A549 (cell line): ENCODE measurements at regions of chr2 and their contacts with region 1.

Region 1: GRCh38 chr2:19111343-19111742 is 247.1 kb downstream of the OSR1 start:
- DNase-seq: no peak
- ATAC-seq: no peak
- H3K4me3 ChIP-seq: no peak overlapping the region
- H3K27ac ChIP-seq: no peak overlapping the region
- H3K4me1 ChIP-seq: no peaks in the 10 kb centered on the region
- CTCF ChIP-seq: no peak
- EP300 ChIP-seq: no peak
- POLR2A ChIP-seq: no peak
- RAD21 ChIP-seq: no peak

Region 2: GRCh38 chr2:18440141-18440661 is 671.1 kb before region 1 on chr2:
- CTCF ChIA-PET with region 1: no interaction called
- POLR2A ChIA-PET with region 1: no interaction called
- DNase-seq: no peak
- ATAC-seq: no peak
- H3K4me3 ChIP-seq: no peak overlapping the region
- H3K27ac ChIP-seq: no peak overlapping the region
- H3K4me1 ChIP-seq: no peaks in the 10 kb centered on the region
- CTCF ChIP-seq: no peak
- EP300 ChIP-seq: no peak
- POLR2A ChIP-seq: no peak
- RAD21 ChIP-seq: no peak

Region 3: GRCh38 chr2:18987592-18988073 is 123.7 kb before region 1 on chr2:
- CTCF ChIA-PET with region 1: no interaction called
- POLR2A ChIA-PET with region 1: no interaction called
- DNase-seq: peak; percentile 27 to 84
- ATAC-seq: peak; percentile 33 to 64; a peak in 3 of 6 replicates
- H3K4me3 ChIP-seq: no peak overlapping the region
- H3K27ac ChIP-seq: peak overlapping the region; percentile 56 to 79
- H3K4me1 ChIP-seq: peaks cover 47% of the 10 kb centered on the region
- CTCF ChIP-seq: peak; percentile 54
- EP300 ChIP-seq: peak; percentile 80; a peak in 3 of 5 replicates
- POLR2A ChIP-seq: no peak
- RAD21 ChIP-seq: peak; percentile 54 to 80

Region 4: DNA sequence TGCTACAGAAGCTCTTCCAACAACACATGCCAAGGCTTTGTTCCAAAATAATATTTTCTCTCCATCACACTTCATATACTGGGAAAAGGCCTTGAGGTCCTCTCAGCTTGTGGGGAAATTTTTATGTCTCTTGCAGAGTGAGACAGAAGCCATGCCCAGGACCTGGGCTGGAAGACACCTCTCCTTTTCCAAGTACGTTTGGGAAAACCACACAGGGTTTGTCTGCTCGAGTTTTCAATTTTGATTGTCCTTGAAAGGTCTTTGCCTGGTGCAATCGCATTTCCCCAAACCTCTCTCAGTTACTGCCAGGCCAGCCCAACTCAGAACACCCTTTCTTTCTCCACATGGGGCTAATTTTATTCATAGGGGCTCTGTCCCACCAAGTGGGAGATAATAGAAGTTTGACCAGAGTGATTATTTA is 25.1 kb before region 1 on chr2:
- CTCF ChIA-PET with region 1: no interaction called
- POLR2A ChIA-PET with region 1: no interaction called
- DNase-seq: no peak
- ATAC-seq: no peak
- H3K4me3 ChIP-seq: no peak overlapping the region
- H3K27ac ChIP-seq: no peak overlapping the region
- H3K4me1 ChIP-seq: no peaks in the 10 kb centered on the region
- CTCF ChIP-seq: no peak
- EP300 ChIP-seq: no peak
- POLR2A ChIP-seq: no peak
- RAD21 ChIP-seq: no peak

Region 5: GRCh38 chr2:19098467-19099159 is 12.7 kb before region 1 on chr2:
- CTCF ChIA-PET with region 1: interaction called, 12 read pairs
- POLR2A ChIA-PET with region 1: no interaction called
- DNase-seq: no peak
- ATAC-seq: no peak
- H3K4me3 ChIP-seq: no peak overlapping the region
- H3K27ac ChIP-seq: no peak overlapping the region
- H3K4me1 ChIP-seq: no peaks in the 10 kb centered on the region
- CTCF ChIP-seq: no peak
- EP300 ChIP-seq: no peak
- POLR2A ChIP-seq: no peak
- RAD21 ChIP-seq: no peak

Region 6: GRCh38 chr2:19124135-19124534 is 12.8 kb after region 1 on chr2:
- CTCF ChIA-PET with region 1: no interaction called
- POLR2A ChIA-PET with region 1: no interaction called
- DNase-seq: peak in 1 of 2 experiments; percentile 42
- ATAC-seq: peak; percentile 76 to 86
- H3K4me3 ChIP-seq: no peak overlapping the region
- H3K27ac ChIP-seq: peak overlapping the region in 1 of 2 experiments; percentile 5; a peak in 1 of 6 replicates
- H3K4me1 ChIP-seq: peaks cover 9% of the 10 kb centered on the region; the same call in 1 of the 3 replicates
- CTCF ChIP-seq: no peak
- EP300 ChIP-seq: no peak
- POLR2A ChIP-seq: no peak
- RAD21 ChIP-seq: no peak